ENCODE measurements at regions of chr17 and their contacts with region 1.

Region 1: GRCh38 chr17:7045909-7046724 is 2.2 kb upstream of the SLC16A11 start:
- DNase-seq: peak; percentile 44
- H3K4me3 ChIP-seq: no peak overlapping the region
- CTCF ChIP-seq: peak; percentile 51

Region 2: GRCh38 chr17:7021993-7022778 is 23.9 kb before region 1 on chr17:
- CTCF ChIA-PET with region 1: interaction called, 13 read pairs
- POLR2A ChIA-PET with region 1: no interaction called
- DNase-seq: no peak
- H3K4me3 ChIP-seq: peak overlapping the region; percentile 44
- CTCF ChIP-seq: peak; percentile 98

Region 3: DNA sequence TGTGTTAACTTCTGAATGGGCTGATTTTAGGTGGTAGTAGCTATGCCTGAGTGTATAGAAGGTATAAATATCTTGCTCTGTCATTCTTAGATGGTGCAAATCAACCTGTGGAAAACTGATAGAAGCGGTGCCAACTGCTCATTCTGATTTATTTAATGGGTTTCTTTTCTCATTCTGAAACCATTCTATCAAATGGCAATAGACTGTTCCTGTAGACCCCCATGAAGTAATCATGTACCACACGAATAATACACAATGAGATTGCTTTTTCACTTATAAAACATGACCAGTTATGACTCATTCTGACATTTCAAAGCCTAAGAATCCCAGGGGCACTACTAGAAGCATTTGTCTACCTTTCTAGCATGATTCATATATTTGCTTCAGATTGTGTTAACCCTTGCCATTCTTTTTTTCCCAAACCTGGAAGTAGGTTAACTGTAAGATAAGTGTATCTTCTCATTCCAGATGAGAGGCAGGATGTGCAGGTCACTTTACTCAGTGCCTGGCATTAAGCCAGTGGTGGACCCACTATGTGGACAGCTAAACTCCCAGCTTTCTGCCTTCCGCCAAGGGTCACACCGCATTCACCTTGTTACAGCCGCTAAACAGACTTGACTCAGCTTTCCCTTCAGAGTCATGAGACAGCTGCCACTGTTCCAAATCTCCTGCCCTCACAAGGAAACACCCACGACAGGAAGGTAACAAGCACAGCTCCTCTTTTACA is 14.2 kb after region 1 on chr17:
- CTCF ChIA-PET with region 1: interaction called, 21 read pairs
- POLR2A ChIA-PET with region 1: no interaction called
- DNase-seq: no peak
- H3K4me3 ChIP-seq: no peak overlapping the region
- CTCF ChIP-seq: no peak

Region 4: GRCh38 chr17:7147772-7148171 is 101.7 kb after region 1 on chr17:
- CTCF ChIA-PET with region 1: interaction called, 20 read pairs
- POLR2A ChIA-PET with region 1: no interaction called
- DNase-seq: no peak
- H3K4me3 ChIP-seq: no peak overlapping the region
- CTCF ChIP-seq: no peak

Region 5: GRCh38 chr17:7214300-7215135 is 168.4 kb after region 1 on chr17:
- CTCF ChIA-PET with region 1: interaction called, 11 read pairs
- POLR2A ChIA-PET with region 1: interaction called, 4 read pairs
- DNase-seq: peak; percentile 67
- H3K4me3 ChIP-seq: peak overlapping the region; percentile 66
- CTCF ChIP-seq: peak; percentile 80

Region 6: DNA sequence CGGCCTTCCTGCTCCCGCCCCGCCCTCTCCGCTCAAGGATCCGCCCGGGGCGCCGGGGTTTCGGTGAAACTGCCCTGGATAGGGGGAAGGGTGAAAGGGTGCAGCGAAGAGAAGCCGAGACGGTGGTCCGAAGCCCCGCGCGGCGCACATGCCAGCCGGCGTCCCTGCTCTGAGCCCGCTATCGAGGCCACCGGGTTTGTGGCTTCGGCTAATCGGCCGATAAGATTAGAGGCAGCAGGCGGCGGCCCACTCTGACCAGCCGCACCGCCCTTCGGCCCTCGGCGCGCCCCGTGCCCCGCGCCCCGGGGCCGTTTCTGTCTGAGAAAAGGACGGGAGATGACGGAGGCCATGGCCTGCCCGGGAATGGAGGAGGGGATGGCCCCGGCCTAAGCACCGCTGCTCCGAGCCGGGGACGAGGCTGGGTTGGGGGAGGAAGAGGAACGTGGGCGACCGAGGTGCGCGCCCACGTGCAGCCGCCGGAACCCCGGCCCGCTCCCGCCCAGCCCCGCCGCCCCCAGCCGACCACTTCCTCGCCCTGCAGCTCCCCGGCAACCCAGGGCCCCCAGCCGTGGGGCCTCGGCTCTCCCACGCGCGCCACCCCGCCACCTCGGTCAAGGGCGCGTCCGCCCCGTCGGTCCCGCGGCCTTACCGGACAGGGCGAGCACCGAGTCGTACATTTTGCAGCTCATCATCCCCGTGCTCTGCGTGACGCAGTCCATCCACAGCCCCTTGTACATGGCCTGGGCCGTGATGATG is 215.2 kb after region 1 on chr17:
- CTCF ChIA-PET with region 1: no interaction called
- POLR2A ChIA-PET with region 1: no interaction called
- DNase-seq: no peak
- H3K4me3 ChIP-seq: peak overlapping the region; percentile 48
- CTCF ChIP-seq: no peak

Region 7: DNA sequence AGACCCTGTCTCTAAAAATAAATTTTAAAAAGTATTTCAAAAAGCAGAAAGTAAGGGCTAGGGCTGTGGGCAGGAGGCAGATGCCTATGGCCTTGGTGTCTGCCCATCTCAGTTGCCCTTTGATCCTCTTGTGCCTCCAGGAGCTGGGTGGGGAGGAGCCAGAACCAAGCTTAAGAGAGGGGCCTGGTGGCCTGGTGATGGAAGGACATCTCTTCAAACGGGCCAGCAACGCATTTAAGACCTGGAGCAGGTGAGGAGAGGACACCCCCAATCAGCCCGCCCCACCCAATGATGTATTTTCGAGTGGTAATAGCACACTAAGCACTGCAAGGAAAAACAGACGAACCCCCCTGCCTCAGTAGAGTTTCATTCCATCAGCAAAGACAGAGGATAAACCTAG is 298.3 kb after region 1 on chr17:
- CTCF ChIA-PET with region 1: interaction called, 18 read pairs
- POLR2A ChIA-PET with region 1: no interaction called
- DNase-seq: no peak
- H3K4me3 ChIP-seq: no peak overlapping the region
- CTCF ChIP-seq: no peak

Measured in AG04449 (cell line).